Naive thymus-derived CD4-positive, alpha-beta T cell (primary cell): ENCODE measurements at regions of chr1 and their contacts with region 1.

Region 1: DNA sequence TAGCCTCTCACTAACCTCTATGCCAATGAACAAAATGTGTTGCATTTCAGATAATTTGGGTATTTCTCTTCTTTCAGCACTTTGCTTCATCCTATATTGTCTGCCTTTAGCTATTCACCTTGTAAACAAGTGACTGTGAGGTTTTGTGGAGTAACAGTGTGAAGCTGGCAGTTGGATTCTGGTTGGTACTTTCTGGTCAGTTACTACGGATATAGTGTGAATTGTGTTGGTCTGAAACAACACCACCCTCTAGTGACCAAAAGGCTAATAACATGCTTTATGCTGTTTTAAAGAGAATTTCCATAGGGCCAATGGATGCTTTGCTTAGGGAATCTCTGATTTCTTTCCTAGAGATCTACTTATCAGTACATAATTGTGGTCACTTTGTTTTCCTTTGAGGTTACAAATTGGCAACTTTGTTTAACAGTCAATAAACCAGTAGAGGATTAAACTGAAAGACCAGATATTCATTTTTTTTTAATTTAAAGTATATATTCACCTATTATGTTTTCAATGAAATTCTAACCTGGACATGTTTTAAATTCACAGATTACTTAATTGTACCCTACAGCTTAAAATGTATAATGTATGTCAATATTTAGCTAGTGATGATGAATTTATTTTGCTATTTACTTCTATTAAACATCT is 2.5 kb upstream of the PTGER3 start:
- DNase-seq: peak in 6 of 9 donors; percentile 10 to 40 (median 34)
- ATAC-seq: peak; percentile 58
- H3K4me3 ChIP-seq: no peak overlapping the region
- H3K4me3 Mint-ChIP-seq: no peak overlapping the region
- H3K27ac ChIP-seq: no peak overlapping the region
- H3K27ac Mint-ChIP-seq: no peak overlapping the region
- H3K4me1 ChIP-seq: peaks cover 0 to 5% of the 10 kb centered on the region in 2 donors
- H3K4me1 Mint-ChIP-seq: peaks cover 6 to 27% (median 20%) of the 10 kb centered on the region in 7 donors
- H3K27me3 ChIP-seq: peaks cover 14 to 15% of the 10 kb centered on the region in 2 donors
- H3K27me3 Mint-ChIP-seq: peaks cover 27 to 51% (median 34%) of the 10 kb centered on the region in 5 donors

Region 2: GRCh38 chr1:70134148-70134547 is 915.9 kb before region 1 on chr1:
- CTCF ChIA-PET with region 1: no interaction called
- POLR2A ChIA-PET with region 1: no interaction called
- intact Hi-C with region 1: loop called (anchors 1 to 10 kb)
- DNase-seq: no peak
- ATAC-seq: no peak
- H3K4me3 ChIP-seq: no peak overlapping the region
- H3K4me3 Mint-ChIP-seq: no peak overlapping the region
- H3K27ac ChIP-seq: no peak overlapping the region
- H3K27ac Mint-ChIP-seq: no peak overlapping the region
- H3K4me1 ChIP-seq: no peaks in the 10 kb centered on the region
- H3K4me1 Mint-ChIP-seq: peaks cover 0 to 4% (median 0%) of the 10 kb centered on the region in 7 donors
- H3K27me3 ChIP-seq: no peaks in the 10 kb centered on the region
- H3K27me3 Mint-ChIP-seq: peaks cover 0 to 25% (median 9%) of the 10 kb centered on the region in 5 donors

Region 3: DNA sequence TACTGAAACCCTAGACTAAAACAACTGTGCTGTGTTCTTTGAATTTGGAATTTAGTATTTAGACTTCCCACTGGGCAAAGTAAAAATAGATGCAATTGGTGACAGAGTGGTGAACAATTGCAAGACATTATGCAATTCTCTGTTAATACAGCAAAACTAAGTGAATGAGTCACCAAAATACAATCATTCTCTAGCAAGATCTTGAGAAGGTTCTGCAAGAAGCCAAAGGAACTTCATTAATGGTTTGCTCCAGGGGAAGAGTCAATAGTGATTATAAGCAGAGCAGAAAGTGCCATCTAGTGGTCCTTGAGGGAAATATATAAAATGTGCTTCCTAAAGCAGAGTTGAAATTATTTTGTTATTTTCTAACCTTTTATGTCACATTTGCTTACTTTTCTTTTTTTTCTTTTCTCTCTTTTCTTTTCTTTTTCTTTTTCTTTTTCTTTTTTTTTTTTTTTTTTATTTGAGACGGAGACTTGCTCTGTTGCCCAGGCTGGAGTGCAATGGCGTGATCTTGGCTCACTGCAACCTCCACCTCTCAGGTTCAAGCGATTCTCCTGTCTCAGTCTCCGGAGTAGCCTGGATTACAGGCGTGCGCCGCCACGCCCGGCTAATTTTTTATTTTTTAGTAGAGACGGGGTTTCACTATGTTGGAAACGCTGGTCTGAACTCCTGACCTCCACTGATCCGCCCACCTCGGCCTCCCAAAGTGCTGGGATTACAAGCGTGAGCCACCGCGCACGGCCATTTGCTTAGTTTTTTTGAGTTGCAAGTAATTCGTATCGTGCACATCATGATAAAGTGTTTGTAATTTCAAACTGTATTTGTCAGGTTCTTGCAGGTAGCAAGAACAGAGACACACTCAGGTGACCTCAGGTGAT is 539.8 kb before region 1 on chr1:
- CTCF ChIA-PET with region 1: no interaction called
- POLR2A ChIA-PET with region 1: no interaction called
- intact Hi-C with region 1: loop called in 1 of 2 experiments (anchors 5 kb)
- DNase-seq: peak in 7 of 9 donors; percentile 12 to 49 (median 25)
- ATAC-seq: peak; percentile 79
- H3K4me3 ChIP-seq: no peak overlapping the region
- H3K4me3 Mint-ChIP-seq: no peak overlapping the region
- H3K27ac ChIP-seq: no peak overlapping the region
- H3K27ac Mint-ChIP-seq: no peak overlapping the region
- H3K4me1 ChIP-seq: no peaks in the 10 kb centered on the region
- H3K4me1 Mint-ChIP-seq: no peaks in the 10 kb centered on the region
- H3K27me3 ChIP-seq: no peaks in the 10 kb centered on the region
- H3K27me3 Mint-ChIP-seq: peaks cover 0 to 21% (median 6%) of the 10 kb centered on the region in 5 donors

Region 4: DNA sequence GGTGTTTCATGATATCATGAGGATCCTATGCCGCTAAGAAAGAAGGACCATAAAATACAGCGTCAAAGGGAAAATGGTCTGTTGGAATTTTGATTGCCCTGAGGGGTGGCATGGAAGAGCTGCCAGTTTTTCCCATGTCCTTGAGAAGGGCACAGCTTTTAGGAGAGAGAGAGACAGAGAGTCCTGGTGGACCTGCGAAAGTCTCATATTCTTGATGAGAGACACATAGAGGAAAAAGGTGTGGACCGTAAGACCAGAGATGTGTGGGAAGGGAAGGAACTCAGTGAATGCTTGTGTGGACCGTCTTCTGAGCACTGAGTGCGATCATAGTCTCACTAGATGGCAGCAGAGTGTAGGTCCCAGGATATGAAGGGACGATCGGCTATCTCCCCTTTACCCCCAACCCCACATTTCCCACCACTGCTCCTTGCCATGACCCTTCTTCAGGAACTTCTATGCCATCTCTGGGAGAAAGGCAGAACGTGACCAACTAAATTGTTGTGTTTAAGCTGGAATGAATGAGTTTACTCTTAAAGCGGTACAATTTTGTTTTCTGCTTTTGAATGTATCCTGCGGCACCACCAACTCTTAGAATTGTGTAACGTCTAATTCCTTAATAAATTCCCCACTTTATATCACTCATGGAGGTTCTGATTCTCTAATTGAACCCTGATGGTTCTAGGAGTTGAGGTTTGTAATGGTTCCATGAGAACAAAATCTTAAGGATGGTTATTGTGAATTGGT is 521.3 kb before region 1 on chr1:
- CTCF ChIA-PET with region 1: no interaction called
- POLR2A ChIA-PET with region 1: no interaction called
- intact Hi-C with region 1: loop called in 1 of 2 experiments (anchors 1 kb)
- DNase-seq: peak in 1 of 9 donors; percentile 4
- ATAC-seq: no peak
- H3K4me3 ChIP-seq: no peak overlapping the region
- H3K4me3 Mint-ChIP-seq: peak overlapping the region in 1 of 10 donors; percentile 26
- H3K27ac ChIP-seq: no peak overlapping the region
- H3K27ac Mint-ChIP-seq: no peak overlapping the region
- H3K4me1 ChIP-seq: peaks cover 0 to 4% of the 10 kb centered on the region in 2 donors
- H3K4me1 Mint-ChIP-seq: peaks cover 0 to 7% (median 0%) of the 10 kb centered on the region in 7 donors
- H3K27me3 ChIP-seq: no peaks in the 10 kb centered on the region
- H3K27me3 Mint-ChIP-seq: peaks cover 18 to 39% (median 27%) of the 10 kb centered on the region in 5 donors

Region 5: GRCh38 chr1:70685300-70686241 is 364.5 kb before region 1 on chr1:
- CTCF ChIA-PET with region 1: no interaction called
- POLR2A ChIA-PET with region 1: no interaction called
- intact Hi-C with region 1: loop called in 1 of 2 experiments (anchors 1 kb)
- DNase-seq: peak in 7 of 9 donors; percentile 8 to 38 (median 17)
- ATAC-seq: peak; percentile 86
- H3K4me3 ChIP-seq: no peak overlapping the region
- H3K4me3 Mint-ChIP-seq: no peak overlapping the region
- H3K27ac ChIP-seq: no peak overlapping the region
- H3K27ac Mint-ChIP-seq: no peak overlapping the region
- H3K4me1 ChIP-seq: no peaks in the 10 kb centered on the region
- H3K4me1 Mint-ChIP-seq: peaks cover 0 to 4% (median 0%) of the 10 kb centered on the region in 7 donors
- H3K27me3 ChIP-seq: no peaks in the 10 kb centered on the region
- H3K27me3 Mint-ChIP-seq: peaks cover 5 to 26% (median 10%) of the 10 kb centered on the region in 5 donors

Region 6: GRCh38 chr1:71080739-71081696 is 30.9 kb after region 1 on chr1 and contains the start of gene ZRANB2:
- CTCF ChIA-PET with region 1: interaction called, 3 read pairs
- POLR2A ChIA-PET with region 1: interaction called, 3 read pairs
- intact Hi-C with region 1: loop called (anchors 2 kb)
- DNase-seq: peak; percentile 74 to 96 (median 94)
- ATAC-seq: peak; percentile 98
- H3K4me3 ChIP-seq: peak within 1 kb of the TSS; percentile 87
- H3K4me3 Mint-ChIP-seq: peak within 1 kb of the TSS; percentile 93 to 100 (median 99)
- H3K27ac ChIP-seq: peak within 1 kb of the TSS; percentile 95
- H3K27ac Mint-ChIP-seq: peak within 1 kb of the TSS; percentile 98 to 100 (median 99)
- H3K4me1 ChIP-seq: peaks cover 15 to 19% of the 10 kb centered on the region in 2 donors
- H3K4me1 Mint-ChIP-seq: peaks cover 7 to 55% (median 39%) of the 10 kb centered on the region in 7 donors
- H3K27me3 ChIP-seq: no peaks in the 10 kb centered on the region
- H3K27me3 Mint-ChIP-seq: peaks cover 12 to 28% (median 17%) of the 10 kb centered on the region in 5 donors
- total RNA-seq, gene ZRANB2: 84.9 to 167 (median 121) TPM

Region 7: GRCh38 chr1:71269818-71270217 is 219.7 kb after region 1 on chr1:
- CTCF ChIA-PET with region 1: no interaction called
- POLR2A ChIA-PET with region 1: no interaction called
- intact Hi-C with region 1: no loop called
- DNase-seq: no peak
- ATAC-seq: no peak
- H3K4me3 ChIP-seq: no peak overlapping the region
- H3K4me3 Mint-ChIP-seq: no peak overlapping the region
- H3K27ac ChIP-seq: no peak overlapping the region
- H3K27ac Mint-ChIP-seq: no peak overlapping the region
- H3K4me1 ChIP-seq: no peaks in the 10 kb centered on the region
- H3K4me1 Mint-ChIP-seq: no peaks in the 10 kb centered on the region
- H3K27me3 ChIP-seq: no peaks in the 10 kb centered on the region
- H3K27me3 Mint-ChIP-seq: no peaks in the 10 kb centered on the region

Region 8: GRCh38 chr1:72282271-72283021 is 1232.4 kb after region 1 on chr1 and contains the start of gene NEGR1:
- CTCF ChIA-PET with region 1: no interaction called
- POLR2A ChIA-PET with region 1: no interaction called
- intact Hi-C with region 1: loop called in 1 of 2 experiments (anchors 5 kb)
- DNase-seq: peak; percentile 31 to 68 (median 55)
- ATAC-seq: peak; percentile 80
- H3K4me3 ChIP-seq: peak within 1 kb of the TSS; percentile 71
- H3K4me3 Mint-ChIP-seq: peak within 1 kb of the TSS in 4 of 10 donors; percentile 65 to 86 (median 82)
- H3K27ac ChIP-seq: peak within 1 kb of the TSS; percentile 53
- H3K27ac Mint-ChIP-seq: peak within 1 kb of the TSS in 7 of 9 donors; percentile 43 to 85 (median 68)
- H3K4me1 ChIP-seq: peaks cover 0 to 3% of the 10 kb centered on the region in 2 donors
- H3K4me1 Mint-ChIP-seq: peaks cover 12 to 35% (median 18%) of the 10 kb centered on the region in 7 donors
- H3K27me3 ChIP-seq: no peaks in the 10 kb centered on the region
- H3K27me3 Mint-ChIP-seq: peaks cover 0 to 35% (median 11%) of the 10 kb centered on the region in 5 donors
- total RNA-seq, gene NEGR1: 0.08 to 1.2 TPM in 2 of 5 experiments, not detected in the others